CD4-positive, alpha-beta T cell (primary cell): ENCODE measurements at regions of chr16 and their contacts with region 1.

Region 1: GRCh38 chr16:4416200-4417032 is at the start of gene CORO7:
- DNase-seq: peak; percentile 98 to 100 (median 99)
- ATAC-seq: peak; percentile 71
- H3K4me3 ChIP-seq: peak within 1 kb of the TSS; percentile 81
- H3K4me3 Mint-ChIP-seq: peak within 1 kb of the TSS; percentile 96
- H3K27ac ChIP-seq: peak within 1 kb of the TSS; percentile 91 to 98
- H3K27ac Mint-ChIP-seq: peak within 1 kb of the TSS; percentile 95
- H3K4me1 ChIP-seq: peaks cover 51% of the 10 kb centered on the region
- H3K4me1 Mint-ChIP-seq: peaks cover 29% of the 10 kb centered on the region
- H3K27me3 ChIP-seq: no peaks in the 10 kb centered on the region
- H3K27me3 Mint-ChIP-seq: no peaks in the 10 kb centered on the region
- CTCF ChIP-seq: no peak
- total RNA-seq, gene CORO7: 801 to 805 TPM

Region 2: GRCh38 chr16:4116337-4117249 is 299.8 kb before region 1 on chr16 and contains the start of gene ADCY9:
- CTCF ChIA-PET with region 1: no interaction called
- POLR2A ChIA-PET with region 1: no interaction called
- intact Hi-C with region 1: loop called in 1 of 2 experiments (anchors 5 kb)
- DNase-seq: peak; percentile 53 to 94 (median 74)
- ATAC-seq: peak; percentile 62
- H3K4me3 ChIP-seq: peak within 1 kb of the TSS; percentile 62
- H3K4me3 Mint-ChIP-seq: peak within 1 kb of the TSS; percentile 96
- H3K27ac ChIP-seq: no peak within 1 kb of the TSS
- H3K27ac Mint-ChIP-seq: peak within 1 kb of the TSS; percentile 69
- H3K4me1 ChIP-seq: peaks cover 42% of the 10 kb centered on the region
- H3K4me1 Mint-ChIP-seq: peaks cover 38% of the 10 kb centered on the region
- H3K27me3 ChIP-seq: no peaks in the 10 kb centered on the region
- H3K27me3 Mint-ChIP-seq: no peaks in the 10 kb centered on the region
- CTCF ChIP-seq: no peak
- total RNA-seq, gene ADCY9: 7.1 to 7.4 TPM

Region 3: GRCh38 chr16:4307215-4308037 is 109.0 kb before region 1 on chr16:
- CTCF ChIA-PET with region 1: interaction called, 3 read pairs
- POLR2A ChIA-PET with region 1: interaction called, 3 read pairs
- intact Hi-C with region 1: loop called in 1 of 2 experiments (anchors 5 kb)
- DNase-seq: peak; percentile 91 to 99 (median 96)
- ATAC-seq: peak; percentile 87
- H3K4me3 ChIP-seq: peak overlapping the region; percentile 72
- H3K4me3 Mint-ChIP-seq: peak overlapping the region; percentile 84
- H3K27ac ChIP-seq: peak overlapping the region; percentile 82 to 90
- H3K27ac Mint-ChIP-seq: peak overlapping the region; percentile 96
- H3K4me1 ChIP-seq: peaks cover 31% of the 10 kb centered on the region
- H3K4me1 Mint-ChIP-seq: peaks cover 15% of the 10 kb centered on the region
- H3K27me3 ChIP-seq: no peaks in the 10 kb centered on the region
- H3K27me3 Mint-ChIP-seq: no peaks in the 10 kb centered on the region
- CTCF ChIP-seq: no peak

Region 4: GRCh38 chr16:4371357-4372000 is 44.9 kb before region 1 on chr16 and contains the start of gene VASN:
- CTCF ChIA-PET with region 1: no interaction called
- POLR2A ChIA-PET with region 1: interaction called, 3 read pairs
- intact Hi-C with region 1: loop called in 1 of 2 experiments (anchors 5 kb)
- DNase-seq: peak; percentile 54 to 86 (median 68)
- ATAC-seq: peak; percentile 71
- H3K4me3 ChIP-seq: peak within 1 kb of the TSS; percentile 49
- H3K4me3 Mint-ChIP-seq: peak within 1 kb of the TSS; percentile 89
- H3K27ac ChIP-seq: no peak within 1 kb of the TSS
- H3K27ac Mint-ChIP-seq: peak within 1 kb of the TSS; percentile 77
- H3K4me1 ChIP-seq: peaks cover 57% of the 10 kb centered on the region
- H3K4me1 Mint-ChIP-seq: peaks cover 35% of the 10 kb centered on the region
- H3K27me3 ChIP-seq: no peaks in the 10 kb centered on the region
- H3K27me3 Mint-ChIP-seq: no peaks in the 10 kb centered on the region
- CTCF ChIP-seq: no peak
- total RNA-seq, gene VASN: 0.70 to 0.77 TPM

Region 5: GRCh38 chr16:4386451-4386805 is 30.0 kb before region 1 on chr16:
- CTCF ChIA-PET with region 1: no interaction called
- POLR2A ChIA-PET with region 1: no interaction called
- intact Hi-C with region 1: no loop called
- DNase-seq: no peak
- ATAC-seq: no peak
- H3K4me3 ChIP-seq: no peak overlapping the region
- H3K4me3 Mint-ChIP-seq: no peak overlapping the region
- H3K27ac ChIP-seq: no peak overlapping the region
- H3K27ac Mint-ChIP-seq: peak overlapping the region; percentile 80
- H3K4me1 ChIP-seq: peaks cover 6% of the 10 kb centered on the region
- H3K4me1 Mint-ChIP-seq: no peaks in the 10 kb centered on the region
- H3K27me3 ChIP-seq: no peaks in the 10 kb centered on the region
- H3K27me3 Mint-ChIP-seq: no peaks in the 10 kb centered on the region
- CTCF ChIP-seq: no peak

Region 6: DNA sequence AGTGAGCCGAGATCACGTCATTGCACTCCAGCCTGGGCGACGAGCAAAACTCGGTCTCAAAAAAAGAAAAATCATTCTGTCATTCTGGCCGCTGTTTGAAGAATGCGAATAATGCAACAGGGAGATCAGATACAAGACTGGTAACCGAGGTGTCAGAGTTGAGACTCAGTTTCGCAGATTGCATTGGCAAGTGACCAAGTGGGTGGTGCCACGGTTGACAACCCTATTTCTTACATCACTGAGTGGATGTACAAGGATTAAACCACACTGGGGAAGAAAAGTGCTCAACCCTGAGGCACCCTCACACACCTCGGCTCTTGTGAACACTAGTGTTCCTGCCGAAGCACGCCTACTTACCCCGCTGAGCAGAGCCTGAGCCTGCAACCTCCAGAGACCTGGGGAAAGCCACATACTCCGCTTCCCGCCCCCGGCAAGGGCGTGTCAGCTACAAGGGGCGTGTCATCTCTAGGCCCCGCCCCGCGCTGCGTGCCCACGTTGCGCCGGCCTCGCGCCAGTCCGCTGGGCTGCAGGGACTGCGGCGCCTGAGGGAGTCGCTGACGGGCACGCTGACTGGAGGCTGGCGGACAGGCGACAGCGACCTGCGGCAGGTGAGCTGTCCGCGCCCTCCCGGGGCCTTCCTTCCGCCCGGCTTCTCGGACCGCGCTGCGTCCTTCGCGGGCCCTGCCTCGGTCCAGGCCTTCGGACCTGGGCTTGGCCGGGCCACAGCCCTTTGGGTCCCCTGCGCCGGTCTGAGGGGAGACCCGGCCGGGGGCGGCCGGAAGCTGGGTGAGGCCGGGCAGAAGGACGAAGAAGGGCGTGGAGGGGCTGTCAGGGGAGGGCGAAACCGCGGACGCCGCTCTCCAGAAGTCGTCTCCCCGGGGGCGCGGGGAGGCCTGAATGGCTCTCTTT is 59.7 kb after region 1 on chr16 and contains the start of gene HMOX2:
- CTCF ChIA-PET with region 1: interaction called, 5 read pairs
- POLR2A ChIA-PET with region 1: interaction called, 10 read pairs
- intact Hi-C with region 1: loop called in 1 of 2 experiments (anchors 5 kb)
- DNase-seq: peak; percentile 86 to 97 (median 92)
- ATAC-seq: peak; percentile 85
- H3K4me3 ChIP-seq: peak within 1 kb of the TSS; percentile 98
- H3K4me3 Mint-ChIP-seq: peak within 1 kb of the TSS; percentile 92
- H3K27ac ChIP-seq: peak within 1 kb of the TSS; percentile 67 to 80
- H3K27ac Mint-ChIP-seq: peak within 1 kb of the TSS; percentile 78
- H3K4me1 ChIP-seq: peaks cover 68% of the 10 kb centered on the region
- H3K4me1 Mint-ChIP-seq: peaks cover 47% of the 10 kb centered on the region
- H3K27me3 ChIP-seq: no peaks in the 10 kb centered on the region
- H3K27me3 Mint-ChIP-seq: no peaks in the 10 kb centered on the region
- CTCF ChIP-seq: peak; percentile 40
- total RNA-seq, gene HMOX2: 63.4 to 66.4 TPM

Region 7: GRCh38 chr16:4538350-4539235 is 122.2 kb after region 1 on chr16 and contains the start of gene CDIP1:
- CTCF ChIA-PET with region 1: no interaction called
- POLR2A ChIA-PET with region 1: interaction called, 16 read pairs
- intact Hi-C with region 1: no loop called
- DNase-seq: peak; percentile 89 to 98 (median 94)
- ATAC-seq: peak; percentile 77
- H3K4me3 ChIP-seq: peak within 1 kb of the TSS; percentile 68
- H3K4me3 Mint-ChIP-seq: peak within 1 kb of the TSS; percentile 91
- H3K27ac ChIP-seq: peak within 1 kb of the TSS; percentile 87 to 89
- H3K27ac Mint-ChIP-seq: peak within 1 kb of the TSS; percentile 89
- H3K4me1 ChIP-seq: peaks cover 47% of the 10 kb centered on the region
- H3K4me1 Mint-ChIP-seq: peaks cover 40% of the 10 kb centered on the region
- H3K27me3 ChIP-seq: no peaks in the 10 kb centered on the region
- H3K27me3 Mint-ChIP-seq: no peaks in the 10 kb centered on the region
- CTCF ChIP-seq: no peak
- total RNA-seq, gene CDIP1: 19.5 to 22.4 TPM